HEK293T (cell line): ENCODE measurements at regions of chr5 and their contacts with region 1.

Region 1: DNA sequence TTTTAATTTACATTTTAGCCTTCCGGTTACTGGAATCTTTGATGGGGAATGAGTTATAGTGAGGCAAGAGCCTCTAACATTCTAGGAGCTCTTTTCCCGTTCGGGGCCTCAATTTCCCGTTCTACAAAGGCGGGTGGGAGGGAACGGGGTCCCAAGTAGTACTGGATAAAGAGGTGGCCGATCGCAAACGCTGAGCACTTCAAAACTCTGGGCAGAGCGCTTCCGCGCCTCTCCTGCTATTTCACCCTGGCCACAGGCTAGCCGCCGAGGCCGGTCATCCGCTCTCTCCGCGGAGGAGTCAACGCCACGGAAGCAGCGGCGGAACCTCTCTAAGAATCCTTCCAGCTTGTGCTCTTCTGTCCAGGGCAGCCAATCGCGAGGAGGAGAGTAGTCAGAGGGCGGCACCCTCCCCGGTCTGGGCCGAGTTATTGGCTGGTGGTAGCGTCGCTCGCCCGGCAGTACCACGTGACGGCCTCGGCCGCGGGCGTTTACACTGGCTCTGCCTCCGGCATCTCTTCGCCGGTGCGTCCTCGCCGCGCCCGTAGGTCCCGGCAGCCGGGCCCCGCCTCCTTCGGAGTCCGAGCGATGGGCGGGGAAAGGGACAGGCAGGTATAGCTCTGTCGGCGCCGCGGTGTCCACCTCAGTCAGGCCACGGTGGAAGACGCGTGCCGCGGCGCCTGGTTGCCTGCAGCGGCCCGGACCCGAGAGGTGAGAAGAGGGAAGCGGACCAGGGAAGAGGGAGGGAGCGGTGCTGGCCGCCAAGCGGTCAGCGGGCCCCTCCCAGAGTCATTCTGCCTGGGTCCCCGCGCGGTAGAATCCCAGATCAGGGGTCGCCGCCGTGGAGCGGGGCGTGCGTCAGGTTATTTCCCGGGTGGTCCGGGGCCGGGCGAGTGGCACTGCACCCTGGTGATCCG is at the start of gene SLC26A2:
- DNase-seq: peak; percentile 95

Region 2: DNA sequence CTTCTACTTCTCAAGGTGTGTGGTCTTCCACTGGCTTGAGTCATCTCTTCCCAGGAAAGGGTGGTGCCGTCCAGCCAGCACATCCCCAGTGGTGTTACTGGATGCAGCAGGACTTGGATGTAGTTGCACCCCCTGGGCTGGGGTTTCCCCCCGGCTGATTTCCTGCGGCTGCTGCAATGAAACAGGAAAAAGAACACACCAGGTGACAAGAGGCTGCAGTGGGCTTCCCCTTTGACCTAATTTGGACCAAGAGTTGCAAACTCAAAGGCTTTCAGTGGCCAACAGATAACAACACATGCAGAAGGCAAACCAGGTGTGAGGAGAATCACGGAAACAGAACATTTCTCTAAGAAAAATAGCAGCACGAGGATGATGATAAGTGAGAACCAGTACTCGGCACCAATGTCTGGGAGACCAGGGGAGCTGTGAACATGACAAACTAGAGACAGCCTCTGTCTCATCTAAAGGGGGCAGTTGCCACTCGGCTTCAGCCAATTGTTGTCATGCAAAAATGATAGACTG is 99.7 kb before region 1 on chr5:
- CTCF ChIA-PET with region 1: interaction called, 10 read pairs
- POLR2A ChIA-PET with region 1: interaction called, 4 read pairs
- DNase-seq: no peak